Esophagus muscularis mucosa (tissue), 4 donors: ENCODE measurements at regions of chr12 and their contacts with region 1.

Region 1: DNA sequence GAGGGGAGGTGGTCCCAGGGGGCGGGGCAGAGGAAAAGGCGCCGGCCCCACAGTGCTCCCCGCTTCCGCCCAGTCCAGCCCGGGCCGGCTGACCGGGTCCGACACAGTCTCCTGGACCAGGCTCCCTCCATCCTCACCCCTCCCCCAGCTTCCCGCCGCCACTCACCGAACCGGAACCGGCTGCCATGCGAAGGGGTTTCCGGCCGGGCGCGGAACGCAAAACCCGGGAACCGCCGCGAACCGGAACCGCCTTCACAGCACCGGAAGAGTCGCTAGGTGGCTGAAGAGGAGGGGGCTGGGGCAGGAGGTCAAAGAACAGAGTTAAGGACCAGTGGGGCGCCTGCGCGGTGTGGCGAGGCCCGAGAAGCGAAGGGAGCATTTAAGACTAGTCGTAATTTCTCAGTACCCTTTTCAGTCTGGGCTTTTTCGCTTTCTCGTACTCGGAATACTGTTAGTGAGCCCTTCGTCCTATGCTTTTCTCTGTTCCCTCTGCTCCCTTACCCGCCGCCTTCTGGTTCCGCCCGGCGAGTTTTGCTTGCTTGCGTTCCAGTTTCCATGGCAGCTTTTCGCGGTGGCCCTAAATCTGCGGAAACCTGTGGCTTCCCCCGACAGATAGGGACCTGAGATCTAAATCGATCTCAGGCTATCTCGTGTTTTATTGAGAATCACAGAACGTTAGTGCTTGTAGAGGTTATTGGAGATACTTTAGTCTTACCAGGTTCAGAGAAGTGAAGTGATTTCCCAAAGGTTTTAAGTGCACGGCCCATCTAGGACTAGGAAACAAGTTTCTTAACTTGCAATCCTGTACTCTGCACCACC is at the start of gene SENP1:
- DNase-seq: peak; percentile 97
- H3K4me3 ChIP-seq: peak within 1 kb of the TSS; percentile 68 to 96 (median 86)
- H3K27ac ChIP-seq: peak within 1 kb of the TSS; percentile 86 to 92 (median 92)
- H3K4me1 ChIP-seq: peaks cover 18 to 29% (median 22%) of the 10 kb centered on the region in 4 donors
- H3K27me3 ChIP-seq: no peaks in the 10 kb centered on the region
- CTCF ChIP-seq: peak; percentile 26 to 39 (median 30)
- EP300 ChIP-seq: no peak
- POLR2A ChIP-seq: peak; percentile 9
- total RNA-seq, gene SENP1: 12.9 to 19.2 (median 14.3) TPM

Region 2: DNA sequence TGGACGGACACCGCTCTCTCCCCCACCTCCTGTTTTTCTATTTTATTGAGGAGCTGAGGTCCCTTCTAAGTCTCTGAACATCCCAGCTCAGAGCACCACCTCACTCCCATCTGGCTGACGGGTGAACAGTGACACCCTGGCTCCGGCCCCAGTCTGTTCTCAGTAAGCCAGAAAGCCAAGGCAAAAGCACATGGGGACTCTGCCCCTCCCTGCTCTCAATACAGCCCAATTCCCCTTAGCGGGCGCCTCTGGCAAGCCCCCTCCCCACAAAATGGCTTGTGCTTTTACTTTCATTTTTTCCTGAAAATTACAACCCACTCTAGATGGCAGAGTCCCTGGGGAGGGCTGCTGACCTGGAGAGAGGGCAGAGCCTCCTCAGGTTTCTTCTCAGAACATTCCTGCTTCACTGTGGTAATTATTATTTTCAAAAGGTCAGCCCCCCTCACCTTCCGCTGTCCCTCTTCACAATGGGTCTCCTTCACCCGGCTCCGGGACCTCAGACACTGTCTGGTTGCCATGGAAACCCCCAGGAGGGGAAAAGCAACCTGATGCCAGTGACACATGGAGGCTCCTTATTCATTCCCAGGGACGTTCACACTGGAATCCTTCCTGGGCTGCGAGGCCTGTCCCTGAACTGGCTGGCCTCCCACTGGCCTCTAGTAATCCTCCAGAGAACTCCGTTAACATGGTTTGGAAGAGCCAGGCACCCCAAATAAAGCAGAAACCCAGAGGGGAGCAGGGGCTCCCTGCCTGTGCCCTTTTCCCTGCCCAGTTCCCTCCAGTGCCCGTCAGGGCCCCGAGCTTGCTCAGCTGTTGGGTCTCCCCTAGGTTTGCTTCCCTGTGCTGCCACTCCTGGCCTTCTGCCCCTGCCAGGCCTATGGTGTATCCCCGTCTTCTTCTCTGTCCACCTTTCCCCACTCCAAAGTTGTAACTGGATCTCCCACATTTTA is 117.7 kb before region 1 on chr12:
- intact Hi-C with region 1: no loop called
- DNase-seq: no peak
- H3K4me3 ChIP-seq: no peak overlapping the region
- H3K27ac ChIP-seq: no peak overlapping the region
- H3K4me1 ChIP-seq: peaks cover 0 to 5% (median 0%) of the 10 kb centered on the region in 4 donors
- H3K27me3 ChIP-seq: no peaks in the 10 kb centered on the region
- CTCF ChIP-seq: no peak
- EP300 ChIP-seq: no peak
- POLR2A ChIP-seq: no peak

Region 3: DNA sequence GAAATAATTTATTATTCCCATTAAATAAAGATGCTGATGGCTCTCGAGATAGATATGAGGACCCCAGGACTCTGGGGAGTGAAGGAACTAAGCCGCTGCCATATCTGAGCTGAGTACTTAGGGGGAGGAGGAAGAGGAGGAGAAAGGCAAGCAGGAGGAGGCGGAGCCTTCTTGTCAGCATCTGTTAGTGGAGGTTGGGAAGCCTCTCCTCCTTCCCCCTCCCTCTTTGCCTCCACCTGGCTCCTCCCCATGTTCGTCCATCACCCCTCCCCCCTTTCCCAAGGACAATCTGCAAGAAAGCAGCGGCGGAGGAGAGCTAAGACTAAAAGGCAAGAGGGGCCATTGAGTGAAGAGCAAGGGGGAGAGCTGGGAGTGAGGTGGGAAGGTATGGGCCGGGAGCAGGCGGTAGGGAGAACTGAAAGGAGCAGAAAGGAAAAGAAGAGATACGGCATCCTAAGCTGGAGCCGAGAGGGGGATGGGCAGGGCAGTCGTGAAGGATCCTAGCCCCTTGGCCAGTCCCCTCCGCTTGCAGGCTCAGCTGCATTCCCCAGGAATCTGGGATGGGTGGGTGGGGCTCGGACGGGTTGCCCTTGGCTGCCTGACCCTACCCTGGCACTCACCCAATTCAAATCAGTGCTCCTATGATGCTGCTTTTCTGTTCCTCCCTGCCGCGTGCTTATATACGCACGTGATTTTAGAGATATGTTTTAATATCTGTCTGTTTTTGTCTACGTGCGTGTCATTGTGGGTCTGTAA is 13.2 kb after region 1 on chr12 and contains the start of gene PFKM:
- intact Hi-C with region 1: loop called (anchors 1 kb)
- DNase-seq: no peak
- H3K4me3 ChIP-seq: peak within 1 kb of the TSS; percentile 59 to 84 (median 76)
- H3K27ac ChIP-seq: peak within 1 kb of the TSS; percentile 74 to 77 (median 76)
- H3K4me1 ChIP-seq: peaks cover 10 to 35% (median 27%) of the 10 kb centered on the region in 4 donors
- H3K27me3 ChIP-seq: no peaks in the 10 kb centered on the region
- CTCF ChIP-seq: no peak
- EP300 ChIP-seq: no peak
- POLR2A ChIP-seq: no peak
- total RNA-seq, gene PFKM: 55.6 to 71.3 (median 63.4) TPM

Region 4: GRCh38 chr12:48157018-48157888 is 51.2 kb after region 1 on chr12 and contains the start of gene ASB8:
- intact Hi-C with region 1: loop called (anchors 5 kb)
- DNase-seq: peak; percentile 99
- H3K4me3 ChIP-seq: peak within 1 kb of the TSS; percentile 68 to 81 (median 74)
- H3K27ac ChIP-seq: peak within 1 kb of the TSS; percentile 79 to 83 (median 81)
- H3K4me1 ChIP-seq: peaks cover 18 to 34% (median 20%) of the 10 kb centered on the region in 4 donors
- H3K27me3 ChIP-seq: peaks cover 0 to under 1% (median 0%) of the 10 kb centered on the region in 4 donors
- CTCF ChIP-seq: peak; percentile 40 to 62 (median 61)
- EP300 ChIP-seq: no peak
- POLR2A ChIP-seq: no peak
- total RNA-seq, gene ASB8: 32.1 to 40.9 (median 36.2) TPM

Region 5: GRCh38 chr12:48197971-48198671 is 92.0 kb after region 1 on chr12:
- intact Hi-C with region 1: no loop called
- DNase-seq: peak; percentile 100
- H3K4me3 ChIP-seq: peak overlapping the region; percentile 71 to 81 (median 76)
- H3K27ac ChIP-seq: peak overlapping the region; percentile 91 to 97 (median 95)
- H3K4me1 ChIP-seq: peaks cover 19 to 25% (median 23%) of the 10 kb centered on the region in 4 donors
- H3K27me3 ChIP-seq: peaks cover 0 to 3% (median 0%) of the 10 kb centered on the region in 4 donors
- CTCF ChIP-seq: peak in 1 of 3 experiments; percentile 3
- EP300 ChIP-seq: no peak
- POLR2A ChIP-seq: no peak

Region 6: GRCh38 chr12:48265777-48266176 is 159.7 kb after region 1 on chr12:
- intact Hi-C with region 1: no loop called
- DNase-seq: no peak
- H3K4me3 ChIP-seq: no peak overlapping the region
- H3K27ac ChIP-seq: no peak overlapping the region
- H3K4me1 ChIP-seq: no peaks in the 10 kb centered on the region
- H3K27me3 ChIP-seq: no peaks in the 10 kb centered on the region
- CTCF ChIP-seq: no peak
- EP300 ChIP-seq: no peak
- POLR2A ChIP-seq: no peak